ENCODE measurements at regions of chr1 and their contacts with region 1.

Region 1: DNA sequence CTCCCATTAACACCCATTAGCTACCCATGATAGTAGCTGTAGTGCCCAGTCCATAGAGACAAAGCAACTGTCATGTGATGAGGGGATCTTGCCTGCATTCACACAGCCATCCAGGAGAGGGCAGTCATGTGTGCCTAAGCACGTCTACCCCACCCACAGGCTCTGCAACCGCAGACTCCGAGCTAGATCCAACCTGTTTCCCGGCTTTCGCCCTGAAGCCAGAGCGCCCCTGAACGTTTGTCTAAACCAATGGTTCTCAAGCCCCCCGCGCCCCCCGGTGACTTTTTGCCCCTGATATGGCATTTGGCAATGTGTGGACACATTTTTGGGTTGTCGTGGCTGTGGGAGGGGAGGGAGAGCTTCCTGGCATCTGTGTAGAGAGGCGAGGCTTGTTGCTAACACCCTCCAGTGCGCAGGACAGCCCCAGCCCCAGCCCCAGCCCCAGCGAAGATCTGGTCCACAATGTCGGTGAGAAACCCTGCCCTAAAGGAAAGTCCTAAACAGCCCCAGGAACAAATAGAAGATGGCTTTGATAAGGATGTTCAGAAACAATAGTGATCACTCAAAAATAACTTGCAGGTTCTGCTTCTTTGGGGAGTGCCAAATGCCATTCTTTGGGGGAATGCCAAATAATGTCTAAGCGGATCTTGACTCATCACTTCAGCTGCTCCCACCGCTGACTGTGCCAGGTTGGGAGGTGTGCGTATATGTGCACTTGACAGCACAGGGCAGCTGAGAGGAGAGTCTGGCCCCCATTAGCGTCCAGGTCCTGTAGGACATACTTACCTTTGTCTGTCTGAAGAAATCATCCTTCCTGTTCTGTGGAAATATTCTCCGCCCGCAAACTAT is 34.5 kb downstream of the SLC44A3 start:
- DNase-seq: no peak
- H3K4me3 ChIP-seq: peak overlapping the region; percentile 40
- H3K27me3 ChIP-seq: no peaks in the 10 kb centered on the region; the same call in 1 of the 2 replicates
- CTCF ChIP-seq: peak; percentile 92

Region 2: GRCh38 chr1:94634977-94635416 is 219.7 kb before region 1 on chr1:
- CTCF ChIA-PET with region 1: no interaction called
- POLR2A ChIA-PET with region 1: no interaction called
- DNase-seq: no peak
- H3K4me3 ChIP-seq: no peak overlapping the region
- H3K27me3 ChIP-seq: no peaks in the 10 kb centered on the region
- CTCF ChIP-seq: no peak

Region 3: DNA sequence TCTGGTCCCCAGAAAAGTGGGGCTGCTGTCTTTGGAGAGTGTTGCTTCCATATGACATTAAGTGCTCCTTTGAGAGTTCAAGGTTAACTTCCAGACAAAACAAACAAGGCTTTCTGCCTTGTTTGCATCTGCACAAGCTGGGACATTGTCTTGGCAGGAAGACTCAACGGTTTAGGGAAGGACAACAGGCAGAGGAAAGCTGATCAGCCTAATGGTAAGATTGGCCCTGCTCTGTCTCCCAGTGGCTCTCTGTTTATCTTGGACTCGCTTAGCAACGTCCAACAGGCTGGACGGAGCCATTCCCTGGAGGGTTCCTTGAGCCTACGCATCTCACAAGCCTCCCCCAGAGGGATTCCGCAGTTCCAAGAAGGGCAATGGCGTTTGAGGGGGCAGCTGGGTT is 96.8 kb before region 1 on chr1:
- CTCF ChIA-PET with region 1: no interaction called
- POLR2A ChIA-PET with region 1: no interaction called
- DNase-seq: no peak
- H3K4me3 ChIP-seq: no peak overlapping the region
- H3K27me3 ChIP-seq: no peaks in the 10 kb centered on the region
- CTCF ChIP-seq: no peak

Region 4: DNA sequence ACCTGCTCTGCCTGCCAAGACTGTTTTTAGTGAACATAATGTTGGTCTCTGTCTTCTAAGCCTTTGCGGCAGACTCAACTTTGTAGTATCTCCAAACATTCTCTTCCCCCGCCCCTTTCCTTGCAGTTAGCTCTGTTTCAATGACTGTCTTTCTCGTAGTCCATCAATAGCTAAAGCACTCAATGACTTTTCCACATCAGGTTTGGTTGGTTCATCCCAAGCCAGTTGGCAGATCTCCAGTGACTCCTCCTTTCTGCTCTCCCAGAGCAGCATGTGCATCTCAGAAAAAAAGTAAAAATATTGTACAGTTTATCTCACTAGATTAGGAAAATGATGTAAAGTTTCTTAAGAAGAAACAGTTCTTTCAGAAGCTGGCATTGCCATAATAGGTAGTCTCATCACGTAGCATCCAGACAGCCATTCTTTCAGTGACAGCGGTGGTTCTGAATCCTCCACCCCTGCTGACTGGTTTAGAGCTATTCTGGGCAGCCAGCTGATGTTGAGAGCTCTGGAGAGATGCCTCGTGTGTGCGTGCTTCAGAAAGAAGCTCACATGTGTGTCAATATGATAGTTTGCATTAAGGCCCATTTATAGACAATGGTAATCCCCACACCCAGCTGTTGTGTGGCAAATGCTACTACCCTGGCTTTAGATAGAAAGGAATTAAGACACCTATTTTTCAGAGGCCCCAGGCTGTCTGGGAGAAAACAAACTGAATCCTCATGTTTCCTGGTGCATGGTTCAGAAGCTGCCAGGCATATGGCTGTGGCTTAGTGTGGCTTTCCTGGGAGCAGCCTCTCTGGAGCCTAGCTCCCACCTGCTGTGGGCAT is 19.1 kb after region 1 on chr1:
- CTCF ChIA-PET with region 1: interaction called, 15 read pairs
- POLR2A ChIA-PET with region 1: no interaction called
- DNase-seq: no peak
- H3K4me3 ChIP-seq: no peak overlapping the region
- H3K27me3 ChIP-seq: no peaks in the 10 kb centered on the region; the same call in 1 of the 2 replicates
- CTCF ChIP-seq: no peak

Region 5: GRCh38 chr1:94898491-94899385 is 44.1 kb after region 1 on chr1:
- CTCF ChIA-PET with region 1: interaction called, 13 read pairs
- POLR2A ChIA-PET with region 1: no interaction called
- DNase-seq: no peak
- H3K4me3 ChIP-seq: no peak overlapping the region
- H3K27me3 ChIP-seq: no peaks in the 10 kb centered on the region
- CTCF ChIP-seq: no peak

Region 6: GRCh38 chr1:94926915-94927404 is 72.3 kb after region 1 on chr1 and contains the start of gene CNN3:
- CTCF ChIA-PET with region 1: interaction called, 30 read pairs
- POLR2A ChIA-PET with region 1: interaction called, 5 read pairs
- DNase-seq: peak; percentile 47
- H3K4me3 ChIP-seq: peak within 1 kb of the TSS; percentile 95
- H3K27me3 ChIP-seq: no peaks in the 10 kb centered on the region
- CTCF ChIP-seq: no peak
- polyA plus RNA-seq, gene CNN3: 169 and 217 TPM in 2 replicates

Region 7: DNA sequence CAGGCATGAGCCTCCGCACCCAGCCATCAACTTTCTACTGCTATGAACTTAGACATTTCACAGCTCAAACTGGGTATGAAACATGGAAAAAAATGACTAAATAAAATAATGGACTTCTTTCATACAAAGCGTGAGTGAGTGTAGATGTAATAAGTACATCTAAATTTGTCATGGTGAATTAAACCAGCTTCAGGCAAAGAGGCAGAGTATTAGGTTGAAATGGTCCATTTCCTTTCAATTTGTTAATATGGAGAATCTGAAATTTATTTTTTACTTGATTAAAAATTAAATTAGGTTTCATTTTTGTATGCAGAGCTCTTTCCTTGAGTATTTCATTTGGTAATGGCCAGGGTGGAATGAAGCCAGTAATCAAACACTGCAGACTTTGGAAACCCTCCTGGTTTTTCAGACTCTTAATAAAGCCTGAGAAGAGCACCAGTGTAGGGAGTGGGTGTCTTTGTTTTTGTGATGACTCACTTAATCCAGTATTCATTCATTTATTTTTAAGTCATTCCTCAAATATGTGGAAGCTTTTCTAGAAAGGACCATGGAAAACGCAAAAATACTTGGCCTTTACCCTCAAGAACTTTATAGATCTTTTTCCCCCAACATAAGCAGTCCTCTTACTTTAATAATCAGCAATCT is 168.8 kb after region 1 on chr1:
- CTCF ChIA-PET with region 1: interaction called, 24 read pairs
- POLR2A ChIA-PET with region 1: no interaction called
- DNase-seq: peak; percentile 90
- H3K4me3 ChIP-seq: no peak overlapping the region
- H3K27me3 ChIP-seq: no peaks in the 10 kb centered on the region
- CTCF ChIP-seq: no peak

Measured in BJ (cell line).